ENCODE measurements at regions of chr11 and their contacts with region 1.

Region 1: DNA sequence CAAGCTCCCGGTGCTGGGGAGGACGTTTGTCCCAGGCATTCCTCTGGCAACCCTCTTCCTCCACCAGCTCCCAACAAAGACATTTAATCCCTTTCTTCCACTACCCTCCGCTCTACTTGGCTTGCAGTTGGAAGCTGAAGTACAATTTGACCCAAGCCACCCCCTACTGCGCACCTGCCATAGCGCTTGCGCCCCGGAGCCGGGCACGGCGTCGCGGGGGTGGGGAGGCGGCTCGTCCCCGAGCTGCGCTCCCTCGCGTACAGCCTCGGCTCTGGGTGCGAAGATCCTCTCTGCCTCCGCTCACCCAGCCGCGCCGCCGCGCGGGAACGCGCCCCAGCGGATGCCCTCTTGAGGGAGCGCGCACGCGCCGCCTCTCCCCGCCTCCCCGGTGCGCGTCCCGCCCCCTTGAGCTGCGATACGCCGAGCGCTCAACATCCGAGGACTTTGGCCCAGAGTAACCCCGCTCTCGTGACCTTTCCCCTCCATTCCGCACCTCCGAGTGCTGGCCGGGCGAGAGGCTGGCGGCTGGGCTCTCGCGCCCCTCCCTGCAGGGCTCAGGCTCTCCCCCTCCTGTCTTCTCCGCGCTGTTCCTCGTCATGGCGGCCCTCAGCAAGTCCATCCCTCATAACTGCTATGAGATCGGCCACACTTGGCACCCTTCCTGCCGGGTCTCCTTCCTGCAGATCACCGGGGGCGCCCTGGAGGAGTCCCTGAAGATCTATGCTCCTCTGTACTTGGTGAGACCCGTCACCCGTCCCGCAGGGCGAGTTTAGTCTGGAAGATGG is at the start of gene TMEM135:
- DNase-seq: peak; percentile 95
- H3K4me3 Mint-ChIP-seq: peak within 1 kb of the TSS; percentile 98
- H3K27ac Mint-ChIP-seq: peak within 1 kb of the TSS; percentile 88
- H3K4me1 Mint-ChIP-seq: peaks cover 32% of the 10 kb centered on the region
- H3K27me3 Mint-ChIP-seq: no peaks in the 10 kb centered on the region
- total RNA-seq, gene TMEM135: 21.8 to 24.8 TPM

Region 2: GRCh38 chr11:85627998-85628770 is 1409.5 kb before region 1 on chr11 and contains the start of gene TMEM126B:
- CTCF ChIA-PET with region 1: no interaction called
- intact Hi-C with region 1: loop called (anchors 10 kb)
- DNase-seq: peak; percentile 98
- H3K4me3 Mint-ChIP-seq: peak within 1 kb of the TSS; percentile 99
- H3K27ac Mint-ChIP-seq: peak within 1 kb of the TSS; percentile 96
- H3K4me1 Mint-ChIP-seq: peaks cover 33% of the 10 kb centered on the region
- H3K27me3 Mint-ChIP-seq: no peaks in the 10 kb centered on the region
- total RNA-seq, gene TMEM126B: 72.6 to 79.0 TPM

Region 3: GRCh38 chr11:86931548-86932258 is 105.9 kb before region 1 on chr11:
- CTCF ChIA-PET with region 1: no interaction called
- intact Hi-C with region 1: no loop called
- DNase-seq: peak; percentile 12
- H3K4me3 Mint-ChIP-seq: no peak overlapping the region
- H3K27ac Mint-ChIP-seq: no peak overlapping the region
- H3K4me1 Mint-ChIP-seq: no peaks in the 10 kb centered on the region
- H3K27me3 Mint-ChIP-seq: no peaks in the 10 kb centered on the region

Region 4: GRCh38 chr11:86955361-86956120 is 82.1 kb before region 1 on chr11 and contains the start of gene FZD4:
- CTCF ChIA-PET with region 1: no interaction called
- intact Hi-C with region 1: loop called (anchors 2 kb)
- DNase-seq: peak; percentile 39
- H3K4me3 Mint-ChIP-seq: peak within 1 kb of the TSS; percentile 78
- H3K27ac Mint-ChIP-seq: no peak within 1 kb of the TSS
- H3K4me1 Mint-ChIP-seq: peaks cover 10% of the 10 kb centered on the region
- H3K27me3 Mint-ChIP-seq: peaks cover 50% of the 10 kb centered on the region
- total RNA-seq, gene FZD4: 0.38 to 0.42 TPM

Region 5: GRCh38 chr11:86990031-86990430 is 47.6 kb before region 1 on chr11:
- CTCF ChIA-PET with region 1: no interaction called
- intact Hi-C with region 1: no loop called
- DNase-seq: no peak
- H3K4me3 Mint-ChIP-seq: no peak overlapping the region
- H3K27ac Mint-ChIP-seq: no peak overlapping the region
- H3K4me1 Mint-ChIP-seq: no peaks in the 10 kb centered on the region
- H3K27me3 Mint-ChIP-seq: no peaks in the 10 kb centered on the region

Region 6: DNA sequence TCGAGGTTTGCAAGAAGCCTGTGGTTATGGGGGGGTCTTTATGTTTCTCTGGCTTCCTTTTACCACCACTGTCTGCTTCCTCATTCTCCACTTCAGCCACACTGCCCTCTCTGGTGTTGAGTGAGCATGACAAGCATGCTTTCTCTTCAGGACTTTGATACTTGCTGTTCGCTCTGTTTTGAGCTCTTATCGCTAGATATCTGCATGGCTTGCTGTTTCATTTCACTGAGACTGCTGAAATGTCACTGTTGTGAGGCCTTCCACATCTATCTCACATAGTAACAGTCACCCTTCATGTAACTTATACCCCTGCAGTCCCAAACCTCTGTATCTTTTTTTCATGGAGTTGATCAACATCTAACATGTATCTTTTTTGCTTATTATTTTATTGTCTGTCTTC is 59.9 kb after region 1 on chr11:
- CTCF ChIA-PET with region 1: no interaction called
- intact Hi-C with region 1: loop called (anchors 1 kb)
- DNase-seq: peak; percentile 53
- H3K4me3 Mint-ChIP-seq: no peak overlapping the region
- H3K27ac Mint-ChIP-seq: no peak overlapping the region
- H3K4me1 Mint-ChIP-seq: peaks cover 4% of the 10 kb centered on the region
- H3K27me3 Mint-ChIP-seq: no peaks in the 10 kb centered on the region

Region 7: DNA sequence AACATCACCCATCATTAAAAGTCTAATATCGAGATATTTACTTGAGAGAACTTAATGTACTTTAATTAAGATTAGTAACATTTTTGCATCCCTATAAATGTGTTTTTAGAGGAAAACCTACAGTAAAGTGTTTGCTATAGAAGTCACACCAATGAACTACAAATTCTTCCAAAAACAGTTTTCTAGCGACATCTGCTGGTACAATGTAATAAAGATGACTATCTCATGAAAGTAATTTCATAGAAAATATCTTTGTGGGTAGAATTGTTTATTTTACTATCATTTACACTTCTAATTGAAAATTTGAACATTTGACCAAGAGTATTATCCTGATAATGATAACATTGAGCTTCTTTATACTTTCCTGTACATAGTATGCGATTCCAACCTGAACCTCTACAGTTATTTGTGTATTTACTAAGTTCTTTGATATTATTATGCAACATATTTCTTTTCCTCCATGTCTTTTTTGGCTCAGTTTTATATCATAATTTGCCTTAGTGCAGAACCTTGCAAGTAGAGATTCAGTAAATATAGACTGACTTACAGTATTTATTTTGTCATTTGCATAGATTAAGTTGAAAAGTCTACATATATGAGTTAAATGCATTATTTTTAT is 252.8 kb after region 1 on chr11:
- CTCF ChIA-PET with region 1: interaction called, 6 read pairs
- intact Hi-C with region 1: loop called (anchors 2 kb)
- DNase-seq: no peak
- H3K4me3 Mint-ChIP-seq: no peak overlapping the region
- H3K27ac Mint-ChIP-seq: no peak overlapping the region
- H3K4me1 Mint-ChIP-seq: no peaks in the 10 kb centered on the region
- H3K27me3 Mint-ChIP-seq: no peaks in the 10 kb centered on the region

Region 8: GRCh38 chr11:88357323-88358039 is 1319.8 kb after region 1 on chr11:
- CTCF ChIA-PET with region 1: no interaction called
- intact Hi-C with region 1: loop called (anchors 5 kb)
- DNase-seq: no peak
- H3K4me3 Mint-ChIP-seq: no peak overlapping the region
- H3K27ac Mint-ChIP-seq: peak overlapping the region; percentile 66
- H3K4me1 Mint-ChIP-seq: peaks cover 41% of the 10 kb centered on the region
- H3K27me3 Mint-ChIP-seq: no peaks in the 10 kb centered on the region